Activated T-helper 2 cell treated with anti-CD3 and anti-CD28 coated beads, Interferon-gamma antibody, Interleukin-2, Interleukin-4, amounts not matched to agents 10 μg/mL and 5 μg/mL and 100 μg/mL, durations not matched to agents 14 hours and 24 hours and 36 hours (primary cell): ENCODE measurements at regions of chr5 and their contacts with region 1.

Region 1: GRCh38 chr5:33964132-33964700 is 20.3 kb downstream of the SLC45A2 start:
- DNase-seq: no peak
- H3K4me3 Mint-ChIP-seq: peak overlapping the region; percentile 4
- H3K27ac Mint-ChIP-seq: no peak overlapping the region
- H3K4me1 Mint-ChIP-seq: peaks cover 34% of the 10 kb centered on the region
- H3K27me3 Mint-ChIP-seq: peaks cover 18% of the 10 kb centered on the region

Region 2: DNA sequence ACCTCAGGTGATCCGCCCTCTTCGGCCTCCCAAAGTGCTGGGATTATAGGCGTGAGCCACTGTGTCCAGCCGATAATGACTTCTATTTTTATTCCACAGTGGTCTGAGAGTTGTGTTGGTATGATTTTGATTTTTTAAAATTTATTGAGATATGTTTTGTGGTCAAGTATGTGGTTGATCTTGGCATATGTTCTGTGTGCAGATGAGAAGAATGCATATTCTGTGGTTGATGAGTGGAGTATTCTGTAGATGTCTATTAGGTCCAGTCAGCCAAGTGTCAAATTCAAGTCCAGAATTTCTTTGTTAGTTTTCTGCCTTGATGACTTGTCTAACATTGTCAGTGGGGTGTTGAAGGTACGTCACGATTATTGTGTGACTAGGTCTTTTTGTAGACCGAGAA is 861.7 kb before region 1 on chr5:
- intact Hi-C with region 1: no loop called
- DNase-seq: no peak
- H3K4me3 Mint-ChIP-seq: no peak overlapping the region
- H3K27ac Mint-ChIP-seq: no peak overlapping the region
- H3K4me1 Mint-ChIP-seq: no peaks in the 10 kb centered on the region
- H3K27me3 Mint-ChIP-seq: no peaks in the 10 kb centered on the region

Region 3: DNA sequence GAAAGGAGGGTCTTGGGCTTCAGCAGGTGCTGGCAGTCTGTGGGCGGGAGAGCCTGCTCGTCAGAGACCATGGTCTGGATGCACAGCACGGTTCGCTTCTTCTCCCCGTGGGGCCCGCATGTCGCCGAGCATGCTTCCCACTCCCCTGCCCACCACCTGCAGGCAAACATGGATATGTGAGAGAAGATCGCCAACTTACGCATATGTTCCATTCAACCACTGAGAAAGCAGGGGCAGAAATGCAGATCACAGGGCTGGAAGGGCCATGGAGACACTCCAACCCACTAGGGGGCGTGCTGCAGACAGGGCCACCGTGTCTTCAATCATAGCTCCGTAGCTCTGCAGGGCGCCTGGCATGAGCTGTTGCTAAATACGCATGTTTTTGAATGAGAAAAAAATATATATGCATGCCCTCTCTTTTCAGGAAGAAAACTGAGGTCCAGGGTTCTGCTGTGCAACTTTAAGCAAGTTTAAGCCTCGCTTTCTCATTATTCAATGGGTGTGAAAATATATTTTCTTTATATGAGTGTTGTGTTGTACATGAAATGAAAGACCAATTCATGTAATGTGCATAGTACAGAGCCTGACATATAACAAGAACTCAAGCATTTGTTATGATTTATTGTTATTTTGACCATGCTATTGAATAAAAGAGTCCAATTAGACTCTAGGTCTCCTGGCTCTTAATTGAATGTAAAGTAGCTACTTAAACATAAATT is 375.4 kb before region 1 on chr5:
- intact Hi-C with region 1: no loop called
- DNase-seq: peak; percentile 25
- H3K4me3 Mint-ChIP-seq: no peak overlapping the region
- H3K27ac Mint-ChIP-seq: no peak overlapping the region
- H3K4me1 Mint-ChIP-seq: no peaks in the 10 kb centered on the region
- H3K27me3 Mint-ChIP-seq: no peaks in the 10 kb centered on the region

Region 4: DNA sequence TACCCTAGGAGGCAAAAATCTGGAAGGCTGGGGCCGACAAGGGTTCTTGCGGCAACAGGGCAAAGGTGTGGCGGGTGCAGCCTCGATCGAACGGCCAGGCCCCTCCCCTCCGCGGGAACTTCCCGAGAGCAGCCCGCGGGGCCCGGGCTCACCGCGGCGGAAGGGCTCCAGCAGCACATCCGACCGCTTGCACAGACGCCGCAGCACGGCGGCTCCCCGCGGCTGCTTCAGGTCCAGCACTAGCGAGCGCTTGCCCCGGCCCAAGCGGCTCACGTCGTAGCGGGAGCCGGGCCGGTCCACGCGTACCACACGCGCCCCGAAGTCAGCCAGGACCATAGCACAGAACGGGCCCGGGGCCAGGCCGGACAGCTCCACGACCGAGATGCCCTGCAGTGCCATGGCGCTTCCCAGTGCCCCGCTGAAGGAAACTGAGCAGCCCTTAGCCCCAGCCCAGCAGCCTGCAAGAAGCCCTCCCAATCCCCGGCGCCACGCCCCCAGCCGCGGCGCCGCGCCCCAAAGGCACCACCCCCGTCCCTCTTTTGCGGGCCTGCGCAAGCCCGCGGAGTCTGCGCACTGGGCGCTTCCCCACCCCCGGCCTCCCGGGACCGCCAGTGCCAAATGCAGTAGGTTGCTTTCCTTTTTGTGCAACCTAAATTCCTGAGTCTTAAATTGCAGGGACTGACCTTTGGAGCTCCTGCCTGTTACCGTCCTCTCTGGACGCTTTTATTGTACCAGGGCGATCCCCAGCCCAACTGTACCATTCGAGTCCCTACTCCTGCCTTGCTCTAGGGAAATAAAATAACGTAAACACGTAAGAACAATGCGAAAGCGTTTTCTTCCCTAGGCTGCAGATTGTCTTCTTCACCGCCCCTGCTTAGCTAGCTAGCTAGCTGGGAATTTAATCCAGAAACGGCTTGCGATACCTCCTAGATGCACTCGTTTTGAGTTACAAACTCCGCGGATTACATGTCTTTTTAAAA is 43.7 kb after region 1 on chr5 and contains the start of gene AMACR:
- intact Hi-C with region 1: loop called (anchors 2 kb)
- DNase-seq: peak; percentile 85
- H3K4me3 Mint-ChIP-seq: peak within 1 kb of the TSS; percentile 86
- H3K27ac Mint-ChIP-seq: peak within 1 kb of the TSS; percentile 86
- H3K4me1 Mint-ChIP-seq: peaks cover 29% of the 10 kb centered on the region
- H3K27me3 Mint-ChIP-seq: no peaks in the 10 kb centered on the region
- total RNA-seq, gene AMACR: 8.3 and 9.0 TPM in 2 replicates